ENCODE measurements at regions of chr20 and their contacts with region 1.

Region 1: DNA sequence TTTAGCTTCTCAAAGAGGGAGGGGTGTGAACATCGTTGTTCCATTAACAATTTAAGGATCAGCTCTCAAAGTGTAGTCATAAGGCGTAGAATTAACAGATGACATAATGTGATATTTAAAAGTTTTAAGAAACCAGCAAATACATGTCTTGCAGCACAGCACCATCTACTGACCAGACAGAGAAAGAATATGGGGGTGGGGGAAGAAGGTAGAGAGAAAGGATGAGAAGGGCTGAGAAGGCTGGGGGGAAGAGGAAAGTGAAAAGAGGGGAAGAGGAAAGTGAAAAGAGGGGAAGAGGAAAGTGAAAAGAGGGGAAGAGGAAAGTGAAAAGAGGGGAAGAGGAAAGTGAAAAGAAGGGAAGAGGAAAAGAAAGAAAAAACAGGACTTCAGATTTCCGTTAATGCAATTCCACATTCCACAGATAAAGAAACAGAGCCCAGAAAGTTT is 80.9 kb downstream of the HAO1 start:
- DNase-seq: peak; percentile 81
- H3K4me3 ChIP-seq: no peak overlapping the region
- H3K27ac ChIP-seq: peak overlapping the region; percentile 45
- H3K4me1 ChIP-seq: peaks cover 28% of the 10 kb centered on the region
- H3K27me3 ChIP-seq: no peaks in the 10 kb centered on the region
- CTCF ChIP-seq: peak; percentile 55 to 63
- POLR2A ChIP-seq: no peak

Region 2: GRCh38 chr20:6265204-6265904 is 1594.0 kb before region 1 on chr20:
- CTCF ChIA-PET with region 1: interaction called, 7 read pairs
- POLR2A ChIA-PET with region 1: no interaction called
- dilution Hi-C with region 1: no loop called
- intact Hi-C with region 1: loop called (anchors 1 kb)
- DNase-seq: peak; percentile 82
- H3K4me3 ChIP-seq: peak overlapping the region in 1 of 3 experiments; percentile 59
- H3K27ac ChIP-seq: peak overlapping the region; percentile 18
- H3K4me1 ChIP-seq: peaks cover 10% of the 10 kb centered on the region
- H3K27me3 ChIP-seq: peaks cover 0 to 4% of the 10 kb centered on the region in 2 experiments
- CTCF ChIP-seq: peak; percentile 11 to 29
- POLR2A ChIP-seq: no peak

Region 3: GRCh38 chr20:6767536-6768227 is 1091.7 kb before region 1 on chr20 and contains the start of gene BMP2:
- CTCF ChIA-PET with region 1: interaction called, 12 read pairs
- POLR2A ChIA-PET with region 1: no interaction called
- dilution Hi-C with region 1: no loop called
- intact Hi-C with region 1: loop called (anchors 1 kb)
- DNase-seq: peak; percentile 74
- H3K4me3 ChIP-seq: peak within 1 kb of the TSS; percentile 87 to 99 (median 92)
- H3K27ac ChIP-seq: peak within 1 kb of the TSS; percentile 61
- H3K4me1 ChIP-seq: peaks cover 21% of the 10 kb centered on the region
- H3K27me3 ChIP-seq: no peaks in the 10 kb centered on the region
- CTCF ChIP-seq: no peak
- POLR2A ChIP-seq: peak; percentile 46
- total RNA-seq, gene BMP2: 11.1 and 15.7 TPM in 2 replicates

Region 4: DNA sequence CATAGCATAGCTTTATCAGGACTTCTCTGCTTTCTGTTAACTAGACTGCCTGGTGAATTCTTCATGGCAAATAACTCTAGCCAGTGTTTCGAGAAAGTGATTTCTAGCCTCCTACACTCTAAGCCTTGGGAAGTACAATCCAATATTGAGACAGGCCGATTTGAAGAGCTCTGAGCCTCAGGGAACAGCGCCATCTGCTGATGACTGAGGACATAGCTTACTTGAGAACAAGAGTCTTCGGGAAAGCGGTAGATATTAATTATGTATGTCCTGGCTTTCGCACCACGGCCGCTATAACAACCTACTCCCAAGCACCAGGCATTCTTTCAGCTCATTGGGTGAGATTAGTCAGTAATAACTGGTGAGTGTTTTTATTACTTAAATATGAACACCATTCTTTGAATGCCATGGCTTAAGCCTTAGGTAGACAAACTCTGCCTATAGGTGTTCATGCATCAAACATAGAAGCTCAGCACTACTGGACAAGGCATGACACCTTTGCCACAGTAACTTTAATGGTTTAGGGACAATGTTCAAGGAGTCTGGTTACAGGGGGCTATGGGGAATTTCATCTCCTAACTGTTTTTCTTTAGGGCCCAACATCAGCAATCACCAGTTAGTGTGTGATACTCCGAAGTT is 573.3 kb before region 1 on chr20:
- CTCF ChIA-PET with region 1: interaction called, 44 read pairs
- POLR2A ChIA-PET with region 1: interaction called, 3 read pairs
- dilution Hi-C with region 1: no loop called
- intact Hi-C with region 1: loop called (anchors 1 kb)
- DNase-seq: peak; percentile 88
- H3K4me3 ChIP-seq: no peak overlapping the region
- H3K27ac ChIP-seq: no peak overlapping the region
- H3K4me1 ChIP-seq: no peaks in the 10 kb centered on the region
- H3K27me3 ChIP-seq: peaks cover 0 to 2% of the 10 kb centered on the region in 2 experiments
- CTCF ChIP-seq: peak; percentile 86
- POLR2A ChIP-seq: no peak

Region 5: GRCh38 chr20:7399575-7399974 is 459.8 kb before region 1 on chr20:
- CTCF ChIA-PET with region 1: interaction called, 3 read pairs
- POLR2A ChIA-PET with region 1: no interaction called
- dilution Hi-C with region 1: no loop called
- intact Hi-C with region 1: loop called (anchors 1 kb)
- DNase-seq: peak; percentile 79
- H3K4me3 ChIP-seq: no peak overlapping the region
- H3K27ac ChIP-seq: peak overlapping the region; percentile 59
- H3K4me1 ChIP-seq: peaks cover 15% of the 10 kb centered on the region
- H3K27me3 ChIP-seq: peaks cover 0 to 2% of the 10 kb centered on the region in 2 experiments
- CTCF ChIP-seq: no peak
- POLR2A ChIP-seq: no peak

Region 6: DNA sequence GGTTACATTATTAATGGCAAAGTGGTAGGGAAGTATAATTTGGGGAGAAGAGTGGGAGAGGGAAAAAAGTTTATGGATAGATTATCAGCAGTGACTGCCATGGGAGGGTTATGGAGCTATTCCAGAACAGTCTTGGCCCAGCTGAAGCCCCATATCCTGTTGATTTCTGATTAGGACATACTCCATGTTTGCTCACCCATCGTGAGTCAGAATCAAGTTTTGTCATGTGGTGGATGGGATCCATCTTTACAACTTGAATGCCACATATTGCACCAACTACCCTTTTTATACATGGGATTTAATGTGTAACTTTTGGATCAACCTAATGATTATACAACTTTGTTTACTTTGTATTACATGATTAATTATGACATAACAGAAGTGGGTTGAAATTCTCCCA is 136.1 kb before region 1 on chr20:
- CTCF ChIA-PET with region 1: no interaction called
- POLR2A ChIA-PET with region 1: no interaction called
- dilution Hi-C with region 1: no loop called
- intact Hi-C with region 1: loop called (anchors 5 kb)
- DNase-seq: peak; percentile 66
- H3K4me3 ChIP-seq: no peak overlapping the region
- H3K27ac ChIP-seq: no peak overlapping the region
- H3K4me1 ChIP-seq: peaks cover 10% of the 10 kb centered on the region
- H3K27me3 ChIP-seq: no peaks in the 10 kb centered on the region
- CTCF ChIP-seq: no peak
- POLR2A ChIP-seq: no peak

Region 7: GRCh38 chr20:7926767-7927166 is 67.4 kb after region 1 on chr20:
- CTCF ChIA-PET with region 1: interaction called, 34 read pairs
- POLR2A ChIA-PET with region 1: no interaction called
- dilution Hi-C with region 1: no loop called
- intact Hi-C with region 1: loop called (anchors 1 kb)
- DNase-seq: peak; percentile 75
- H3K4me3 ChIP-seq: no peak overlapping the region
- H3K27ac ChIP-seq: peak overlapping the region; percentile 92
- H3K4me1 ChIP-seq: peaks cover 26% of the 10 kb centered on the region
- H3K27me3 ChIP-seq: no peaks in the 10 kb centered on the region
- CTCF ChIP-seq: peak; percentile 47 to 52
- POLR2A ChIP-seq: no peak